IMR-90 (cell line): ENCODE measurements at regions of chr9 and their contacts with region 1.

Region 1: GRCh38 chr9:79731171-79731890 is 159.6 kb downstream of the TLE4 start:
- DNase-seq: no peak
- ATAC-seq: no peak
- H3K4me3 ChIP-seq: no peak overlapping the region
- H3K27ac ChIP-seq: no peak overlapping the region
- H3K4me1 ChIP-seq: no peaks in the 10 kb centered on the region
- H3K27me3 ChIP-seq: no peaks in the 10 kb centered on the region
- CTCF ChIP-seq: no peak
- POLR2A ChIP-seq: no peak
- RAD21 ChIP-seq: no peak

Region 2: GRCh38 chr9:79817438-79818004 is 86.2 kb after region 1 on chr9:
- CTCF ChIA-PET with region 1: no interaction called
- POLR2A ChIA-PET with region 1: no interaction called
- dilution Hi-C with region 1: no loop called
- in situ Hi-C with region 1: no loop called
- intact Hi-C with region 1: no loop called
- DNase-seq: no peak
- ATAC-seq: no peak; the same call in 1 of the 2 replicates
- H3K4me3 ChIP-seq: no peak overlapping the region
- H3K27ac ChIP-seq: no peak overlapping the region
- H3K4me1 ChIP-seq: no peaks in the 10 kb centered on the region
- H3K27me3 ChIP-seq: peaks cover 8% of the 10 kb centered on the region
- CTCF ChIP-seq: no peak
- POLR2A ChIP-seq: no peak
- RAD21 ChIP-seq: no peak

Region 3: GRCh38 chr9:79877943-79878602 is 146.7 kb after region 1 on chr9:
- CTCF ChIA-PET with region 1: no interaction called
- POLR2A ChIA-PET with region 1: no interaction called
- dilution Hi-C with region 1: no loop called
- in situ Hi-C with region 1: no loop called
- intact Hi-C with region 1: loop called (anchors 10 kb)
- DNase-seq: no peak
- ATAC-seq: no peak
- H3K4me3 ChIP-seq: no peak overlapping the region
- H3K27ac ChIP-seq: no peak overlapping the region
- H3K4me1 ChIP-seq: no peaks in the 10 kb centered on the region
- H3K27me3 ChIP-seq: peaks cover 2% of the 10 kb centered on the region
- CTCF ChIP-seq: no peak
- POLR2A ChIP-seq: no peak
- RAD21 ChIP-seq: no peak

Region 4: GRCh38 chr9:79889369-79889768 is 158.0 kb after region 1 on chr9:
- CTCF ChIA-PET with region 1: no interaction called
- POLR2A ChIA-PET with region 1: no interaction called
- dilution Hi-C with region 1: no loop called
- in situ Hi-C with region 1: no loop called
- intact Hi-C with region 1: no loop called
- DNase-seq: no peak
- ATAC-seq: no peak
- H3K4me3 ChIP-seq: no peak overlapping the region
- H3K27ac ChIP-seq: no peak overlapping the region
- H3K4me1 ChIP-seq: no peaks in the 10 kb centered on the region
- H3K27me3 ChIP-seq: peaks cover 2% of the 10 kb centered on the region
- CTCF ChIP-seq: no peak
- POLR2A ChIP-seq: no peak
- RAD21 ChIP-seq: no peak

Region 5: DNA sequence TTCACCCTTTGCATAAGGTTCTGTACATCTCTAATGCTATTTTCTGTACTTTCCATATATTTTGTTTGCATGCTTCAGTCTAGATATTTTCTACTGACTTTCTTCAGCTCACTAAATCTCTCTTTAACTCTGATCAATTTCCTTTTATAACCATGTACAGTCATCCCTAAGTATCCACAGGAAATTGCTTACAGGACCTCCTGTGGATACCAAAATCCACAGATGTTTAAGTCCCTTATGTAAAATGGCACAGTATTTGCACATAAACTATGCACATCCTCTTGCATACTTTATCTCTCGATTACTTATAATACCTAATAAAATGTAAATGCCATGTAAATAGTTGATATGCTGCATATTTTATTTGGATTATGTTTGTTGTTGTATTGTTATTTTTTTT is 282.6 kb after region 1 on chr9:
- CTCF ChIA-PET with region 1: no interaction called
- POLR2A ChIA-PET with region 1: no interaction called
- dilution Hi-C with region 1: no loop called
- in situ Hi-C with region 1: no loop called
- intact Hi-C with region 1: no loop called
- DNase-seq: no peak
- ATAC-seq: no peak
- H3K4me3 ChIP-seq: no peak overlapping the region
- H3K27ac ChIP-seq: no peak overlapping the region
- H3K4me1 ChIP-seq: no peaks in the 10 kb centered on the region
- H3K27me3 ChIP-seq: no peaks in the 10 kb centered on the region
- CTCF ChIP-seq: no peak
- POLR2A ChIP-seq: no peak
- RAD21 ChIP-seq: no peak

Region 6: DNA sequence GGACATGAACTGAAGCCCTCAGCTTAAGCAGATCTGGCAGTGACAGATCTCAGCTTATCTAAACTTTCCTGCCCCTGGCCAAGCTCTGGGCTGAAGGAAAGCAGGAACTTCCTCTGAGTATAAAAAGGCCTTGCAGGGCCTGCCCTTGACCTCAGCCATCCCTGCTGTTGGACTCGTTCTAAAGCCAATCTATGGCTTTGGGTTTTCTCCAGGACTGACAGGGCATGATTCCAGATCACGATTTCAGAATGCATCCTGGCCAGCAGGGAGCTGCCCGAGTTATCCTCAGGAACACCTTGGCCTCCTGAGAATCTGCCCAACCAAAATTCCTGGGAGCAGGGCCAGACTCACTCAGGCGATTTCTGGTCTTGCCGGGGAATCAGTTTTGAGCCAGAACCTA is 343.1 kb after region 1 on chr9:
- CTCF ChIA-PET with region 1: no interaction called
- POLR2A ChIA-PET with region 1: no interaction called
- dilution Hi-C with region 1: no loop called
- in situ Hi-C with region 1: no loop called
- intact Hi-C with region 1: no loop called
- DNase-seq: no peak
- ATAC-seq: no peak
- H3K4me3 ChIP-seq: no peak overlapping the region
- H3K27ac ChIP-seq: no peak overlapping the region
- H3K4me1 ChIP-seq: no peaks in the 10 kb centered on the region
- H3K27me3 ChIP-seq: no peaks in the 10 kb centered on the region
- CTCF ChIP-seq: no peak
- POLR2A ChIP-seq: no peak
- RAD21 ChIP-seq: no peak